OCI-LY7 (cell line): ENCODE measurements at regions of chr6 and their contacts with region 1.

Region 1: GRCh38 chr6:88780714-88781389 is 182.6 kb downstream of the RNGTT start:
- DNase-seq: peak; percentile 89
- H3K4me3 ChIP-seq: no peak overlapping the region
- H3K27ac ChIP-seq: no peak overlapping the region
- H3K4me1 ChIP-seq: peaks cover 16% of the 10 kb centered on the region
- CTCF ChIP-seq: peak; percentile 98

Region 2: DNA sequence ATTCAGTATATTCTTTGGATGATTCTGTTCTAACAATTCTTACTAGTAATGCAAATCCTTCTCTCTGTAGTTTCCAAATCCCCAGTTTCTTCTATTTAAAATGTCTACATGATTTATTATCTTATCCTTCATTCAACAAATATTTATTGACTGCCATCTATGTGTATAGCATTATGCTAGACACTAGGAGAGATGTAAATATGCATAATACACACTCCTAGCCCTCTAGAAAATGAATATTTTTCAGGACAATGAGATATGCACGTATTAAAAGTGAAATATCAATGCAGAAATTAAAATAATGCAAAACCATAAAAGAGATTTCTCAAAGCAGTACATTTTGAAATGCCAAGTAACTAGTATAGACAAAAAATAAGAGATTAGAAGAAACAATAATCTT is 321.2 kb before region 1 on chr6:
- CTCF ChIA-PET with region 1: no interaction called
- POLR2A ChIA-PET with region 1: no interaction called
- intact Hi-C with region 1: loop called (anchors 10 kb)
- DNase-seq: no peak
- H3K4me3 ChIP-seq: no peak overlapping the region
- H3K27ac ChIP-seq: no peak overlapping the region
- H3K4me1 ChIP-seq: no peaks in the 10 kb centered on the region
- CTCF ChIP-seq: no peak